Right ventricle myocardium inferior (tissue), 1 donor: ENCODE measurements at regions of chr2 and their contacts with region 1.

Region 1: GRCh38 chr2:65056215-65057053 is at the start of gene CEP68:
- DNase-seq: peak; percentile 98
- ATAC-seq: peak; percentile 97
- total RNA-seq, gene CEP68: 19.7 TPM

Region 2: GRCh38 chr2:65107530-65107929 is 51.1 kb after region 1 on chr2:
- intact Hi-C with region 1: no loop called
- DNase-seq: no peak
- ATAC-seq: peak; percentile 42

Region 3: GRCh38 chr2:65164426-65164891 is 108.0 kb after region 1 on chr2:
- intact Hi-C with region 1: loop called (anchors 5 kb)
- DNase-seq: no peak
- ATAC-seq: peak; percentile 65